ENCODE measurements at regions of chr17 and their contacts with region 1.

Region 1: GRCh38 chr17:28252436-28252835 is 66.6 kb upstream of the TMEM97 start:
- DNase-seq: no peak
- H3K4me3 ChIP-seq: no peak overlapping the region
- H3K4me3 Mint-ChIP-seq: peak overlapping the region in 1 of 7 donors; percentile 19
- H3K27ac ChIP-seq: no peak overlapping the region
- H3K27ac Mint-ChIP-seq: no peak overlapping the region
- H3K4me1 ChIP-seq: peaks cover 5% of the 10 kb centered on the region
- H3K4me1 Mint-ChIP-seq: peaks cover 4 to 11% (median 9%) of the 10 kb centered on the region in 3 donors
- H3K27me3 ChIP-seq: peaks cover 4% of the 10 kb centered on the region
- H3K27me3 Mint-ChIP-seq: peaks cover 14 to 40% of the 10 kb centered on the region in 2 donors

Region 2: GRCh38 chr17:28276011-28276410 is 23.6 kb after region 1 on chr17:
- CTCF ChIA-PET with region 1: interaction called, 10 read pairs
- POLR2A ChIA-PET with region 1: no interaction called
- DNase-seq: no peak
- H3K4me3 ChIP-seq: no peak overlapping the region
- H3K4me3 Mint-ChIP-seq: no peak overlapping the region
- H3K27ac ChIP-seq: no peak overlapping the region
- H3K27ac Mint-ChIP-seq: no peak overlapping the region
- H3K4me1 ChIP-seq: peaks cover 18% of the 10 kb centered on the region
- H3K4me1 Mint-ChIP-seq: peaks cover 17 to 28% (median 26%) of the 10 kb centered on the region in 3 donors
- H3K27me3 ChIP-seq: peaks cover 10% of the 10 kb centered on the region
- H3K27me3 Mint-ChIP-seq: peaks cover 23 to 57% of the 10 kb centered on the region in 2 donors